HepG2 (cell line): ENCODE measurements at regions of chrX and their contacts with region 1.

Region 1: DNA sequence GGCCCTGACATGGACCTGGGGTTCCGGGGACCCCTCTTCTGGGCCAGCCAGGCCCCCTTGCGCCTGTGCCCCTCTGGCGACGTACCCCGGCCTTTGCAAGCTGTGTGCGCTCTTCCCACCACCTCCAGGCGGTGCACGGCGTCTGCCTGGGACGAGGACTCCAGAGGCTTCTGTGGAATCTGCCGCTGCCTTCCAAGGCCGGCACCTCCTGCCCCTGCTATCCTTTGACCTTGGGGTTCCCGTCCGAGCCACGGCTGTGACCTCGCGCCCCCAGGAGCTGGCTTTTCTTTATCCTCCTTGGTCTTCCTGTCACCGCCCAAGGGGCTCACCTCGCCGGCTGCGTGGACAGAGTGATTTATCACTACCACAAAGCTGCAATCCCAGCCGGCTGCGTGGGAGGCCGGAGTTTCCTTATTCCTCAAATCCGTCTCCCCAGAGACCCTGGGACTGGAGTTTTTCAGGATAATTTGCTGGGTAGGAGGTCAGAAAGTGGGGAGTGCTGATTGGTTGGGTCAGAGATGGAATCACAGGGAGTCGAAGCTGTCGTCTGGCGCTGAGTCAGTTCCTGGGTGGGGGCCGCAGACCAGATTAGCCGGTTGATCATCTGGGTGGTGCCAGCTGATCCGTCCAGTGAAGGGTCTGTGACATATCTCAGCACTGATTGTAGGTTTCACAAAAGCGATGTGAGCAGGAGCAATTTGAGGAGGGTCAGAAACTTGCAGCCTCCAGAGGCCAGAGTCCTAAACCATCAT is 19.8 kb upstream of the PLCXD1 start:
- DNase-seq: no peak
- ATAC-seq: peak; percentile 67
- H3K4me3 ChIP-seq: peak overlapping the region; percentile 57 to 73 (median 73)
- H3K27ac ChIP-seq: peak overlapping the region; percentile 89
- H3K4me1 ChIP-seq: peaks cover 72% of the 10 kb centered on the region
- H3K27me3 ChIP-seq: no peaks in the 10 kb centered on the region
- CTCF ChIP-seq: peak; percentile 72
- EP300 ChIP-seq: peak in 1 of 2 experiments; percentile 11; a peak in 1 of 4 replicates
- POLR2A ChIP-seq: peak in 1 of 2 experiments; percentile 20; a peak in 1 of 4 replicates
- RAD21 ChIP-seq: peak; percentile 48; the same call in 1 of the 2 replicates

Region 2: DNA sequence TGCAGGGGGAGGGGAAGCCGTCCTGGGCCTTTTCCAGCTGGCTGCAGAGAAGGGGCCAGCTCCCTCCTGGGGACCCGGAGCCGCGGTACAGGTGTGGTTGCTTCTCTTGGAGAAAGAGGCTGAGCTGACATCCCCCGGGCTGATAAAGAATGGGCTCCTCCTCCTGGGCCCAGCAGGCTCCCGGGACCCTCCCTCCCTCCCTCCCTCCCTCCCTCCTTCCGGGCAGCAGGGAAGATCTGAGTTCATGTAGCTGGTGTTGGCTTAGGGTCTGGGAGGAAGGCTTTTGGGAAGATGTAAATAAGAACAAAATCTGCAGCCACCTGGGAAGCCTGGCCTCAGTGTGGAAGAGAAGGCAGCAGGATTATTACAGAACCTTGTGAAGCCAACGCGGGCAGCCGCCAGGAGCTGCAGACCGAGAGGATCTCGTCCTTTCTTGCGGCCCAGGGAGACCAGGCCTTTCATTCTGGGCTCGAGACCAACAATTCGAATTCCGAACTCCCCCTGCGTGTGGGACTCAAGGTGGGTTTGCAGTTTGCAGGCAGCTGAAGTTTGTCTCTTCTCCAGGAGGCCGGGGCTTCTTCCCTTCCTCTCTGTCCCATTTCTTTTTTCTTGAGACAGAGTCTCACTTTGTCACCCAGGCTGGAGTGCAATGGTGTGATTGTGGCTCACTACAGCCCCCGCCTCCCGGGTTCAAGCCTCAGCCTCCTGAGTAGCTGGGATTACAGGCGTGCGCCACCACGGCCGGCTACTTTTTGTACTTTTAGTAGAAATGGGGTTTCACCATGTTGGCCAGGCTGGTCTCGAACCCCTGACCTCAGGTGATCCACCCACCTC is 20.0 kb after region 1 on chrX and contains the start of gene PLCXD1:
- CTCF ChIA-PET with region 1: no interaction called
- POLR2A ChIA-PET with region 1: no interaction called
- in situ Hi-C with region 1: no loop called
- intact Hi-C with region 1: loop called (anchors 1 kb)
- DNase-seq: peak; percentile 85
- ATAC-seq: peak; percentile 71
- H3K4me3 ChIP-seq: peak within 1 kb of the TSS; percentile 21 to 76 (median 60); a peak in 4 of 6 replicates
- H3K27ac ChIP-seq: peak within 1 kb of the TSS; percentile 98
- H3K4me1 ChIP-seq: peaks cover 51% of the 10 kb centered on the region
- H3K27me3 ChIP-seq: no peaks in the 10 kb centered on the region; a peak in 1 of 5 replicates
- CTCF ChIP-seq: peak; percentile 11; the same call in 1 of the 2 replicates
- EP300 ChIP-seq: peak in 1 of 2 experiments; percentile 14; a peak in 1 of 4 replicates
- POLR2A ChIP-seq: peak in 1 of 2 experiments; percentile 19; a peak in 1 of 4 replicates
- RAD21 ChIP-seq: no peak
- total RNA-seq, gene PLCXD1: 87.7 and 111 TPM in 2 replicates

Region 3: DNA sequence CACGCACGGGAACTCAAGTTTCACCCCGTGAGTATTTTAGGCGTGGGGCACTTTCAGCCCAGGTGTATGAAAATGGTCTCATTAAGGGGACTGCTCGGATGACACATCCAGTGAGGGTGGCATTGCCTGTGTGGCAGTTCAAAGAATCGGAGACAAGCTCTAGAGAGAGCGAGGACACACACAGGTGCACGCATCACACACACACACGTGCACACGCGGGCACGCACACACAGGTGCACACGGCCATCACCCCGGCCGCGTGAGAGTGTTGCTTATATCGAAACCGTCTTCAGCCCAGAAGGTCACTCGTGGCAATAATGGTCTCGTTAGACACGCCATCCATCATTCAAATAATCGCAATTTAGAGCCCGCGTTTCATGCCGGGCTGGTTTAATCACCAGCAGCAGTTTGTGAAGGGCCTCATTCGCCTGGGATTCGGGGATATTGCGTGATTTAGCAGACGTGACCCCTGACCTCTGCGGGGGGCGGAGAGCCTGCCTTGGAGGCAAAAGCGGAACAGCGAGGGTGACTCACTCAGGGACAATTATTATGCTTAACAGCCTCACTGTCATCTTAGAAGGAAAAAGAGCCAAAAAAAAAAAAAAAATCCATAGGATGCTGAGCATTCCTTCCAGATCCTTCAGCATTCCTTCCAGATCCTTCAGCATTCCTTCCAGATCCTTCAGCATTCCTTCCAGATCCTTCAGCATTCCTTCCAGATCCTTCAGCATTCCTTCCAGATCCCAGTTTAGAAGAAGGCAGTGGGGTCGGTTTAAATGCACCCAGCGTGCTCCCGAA is 214.8 kb after region 1 on chrX:
- CTCF ChIA-PET with region 1: no interaction called
- POLR2A ChIA-PET with region 1: no interaction called
- in situ Hi-C with region 1: no loop called
- intact Hi-C with region 1: no loop called
- DNase-seq: no peak
- ATAC-seq: no peak
- H3K4me3 ChIP-seq: no peak overlapping the region
- H3K27ac ChIP-seq: no peak overlapping the region
- H3K4me1 ChIP-seq: no peaks in the 10 kb centered on the region
- H3K27me3 ChIP-seq: peaks cover 0 to 26% of the 10 kb centered on the region in 2 experiments; a peak in 2 of 5 replicates
- CTCF ChIP-seq: no peak
- EP300 ChIP-seq: no peak
- POLR2A ChIP-seq: no peak
- RAD21 ChIP-seq: no peak